HAP-1 (cell line): ENCODE measurements at regions of chr12 and their contacts with region 1.

Region 1: GRCh38 chr12:59149997-59150642 is 229.8 kb upstream of the LRIG3 start:
- DNase-seq: peak; percentile 31 to 85
- H3K4me3 ChIP-seq: no peak overlapping the region
- H3K4me1 ChIP-seq: no peaks in the 10 kb centered on the region
- H3K27me3 ChIP-seq: 0 out of 2 replicates have a peak, but pooled peaks cover 2% of the 10 kb centered on the region

Region 2: GRCh38 chr12:57983146-57983857 is 1166.8 kb before region 1 on chr12:
- in situ Hi-C with region 1: loop called (anchors 25 kb)
- DNase-seq: peak; percentile 28 to 61
- H3K4me3 ChIP-seq: no peak overlapping the region
- H3K4me1 ChIP-seq: no peaks in the 10 kb centered on the region; the same call in 1 of the 2 replicates
- H3K27me3 ChIP-seq: no peaks in the 10 kb centered on the region; the same call in 1 of the 2 replicates

Region 3: GRCh38 chr12:58346032-58346632 is 804.0 kb before region 1 on chr12:
- in situ Hi-C with region 1: loop called (anchors 10 kb)
- DNase-seq: peak in 1 of 2 experiments; percentile 63
- H3K4me3 ChIP-seq: no peak overlapping the region
- H3K4me1 ChIP-seq: no peaks in the 10 kb centered on the region
- H3K27me3 ChIP-seq: no peaks in the 10 kb centered on the region

Region 4: DNA sequence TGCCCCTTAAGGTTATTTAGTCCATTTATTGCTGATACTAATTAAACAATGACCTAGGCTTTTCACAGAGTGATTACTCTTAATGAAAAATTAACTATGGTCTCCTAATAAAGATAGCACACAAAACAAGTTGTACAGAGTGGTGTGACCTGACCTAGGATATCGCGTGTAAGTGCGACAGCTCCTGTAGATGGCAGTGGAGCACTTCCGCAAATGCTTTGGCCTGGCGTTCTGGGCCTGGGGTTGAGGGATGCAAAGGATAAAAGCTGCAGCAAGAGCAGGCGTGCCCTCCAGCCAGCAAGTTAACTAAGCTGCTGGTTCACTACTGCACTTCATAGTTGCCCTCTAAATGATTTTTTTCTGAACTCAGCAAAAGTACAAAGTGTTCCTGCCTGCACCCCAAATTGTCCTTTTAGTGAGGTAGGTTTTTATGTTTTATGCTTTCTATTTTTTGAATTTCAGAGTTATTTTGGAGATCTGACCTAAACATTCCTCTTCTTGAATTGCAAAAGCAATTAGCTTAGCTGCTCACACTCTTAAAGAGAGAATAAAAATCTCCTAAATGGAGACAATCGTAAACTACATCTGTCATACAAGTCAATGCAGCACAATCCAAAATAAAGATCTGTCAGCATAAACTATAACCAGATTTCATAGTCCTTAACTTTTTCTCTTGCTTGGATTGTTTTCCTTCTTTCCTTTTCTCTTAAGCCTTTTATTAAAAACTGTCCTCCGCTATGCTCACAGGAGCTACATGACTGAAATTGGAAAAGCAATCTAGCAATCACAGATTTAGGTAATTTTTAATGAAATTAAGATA is 609.4 kb before region 1 on chr12:
- in situ Hi-C with region 1: loop called (anchors 25 kb)
- DNase-seq: peak; percentile 67 to 83
- H3K4me3 ChIP-seq: no peak overlapping the region
- H3K4me1 ChIP-seq: peaks cover 7% of the 10 kb centered on the region
- H3K27me3 ChIP-seq: no peaks in the 10 kb centered on the region